Activated CD4-positive, alpha-beta memory T cell treated with anti-CD3 and anti-CD28 coated beads for 36 hours (primary cell): ENCODE measurements at regions of chr22 and their contacts with region 1.

Region 1: DNA sequence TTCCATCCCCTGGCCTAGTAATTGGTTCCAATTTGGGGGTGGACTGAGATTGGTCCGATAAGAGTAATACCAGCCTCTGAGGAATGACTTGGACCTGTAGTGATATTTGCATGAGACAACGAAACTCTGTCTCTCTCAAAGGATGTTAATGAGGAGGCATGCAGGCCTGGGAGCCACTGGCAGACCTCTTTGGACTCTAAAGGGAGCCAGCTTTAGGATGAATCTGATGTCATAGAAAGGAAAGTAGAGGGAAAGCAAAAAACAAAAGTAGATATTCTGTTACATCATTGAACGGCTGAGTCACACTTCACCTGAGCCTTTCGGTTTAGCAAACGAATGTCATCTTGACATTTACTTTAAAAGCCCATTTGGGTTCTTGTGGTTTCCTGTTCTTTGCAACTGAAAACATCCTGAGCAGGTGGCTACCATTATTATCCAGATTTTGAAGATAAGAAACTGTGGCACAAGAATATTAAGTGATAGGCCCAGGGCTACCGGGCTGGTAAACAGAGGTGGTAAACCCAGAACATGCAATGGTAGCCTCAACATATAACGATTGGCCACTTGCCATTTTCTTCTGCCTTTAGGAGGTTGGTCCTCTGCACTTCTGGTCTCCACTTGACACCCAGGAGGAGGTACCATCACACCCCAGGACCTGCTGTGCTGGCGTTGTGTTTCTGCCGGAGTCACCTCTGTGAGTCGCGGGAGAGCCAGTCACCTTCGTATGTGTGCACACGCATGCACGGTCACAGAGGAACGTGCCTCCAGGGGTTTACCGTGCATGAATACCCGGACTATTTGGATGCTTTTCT is 42.7 kb downstream of the RTL6 start:
- DNase-seq: peak; percentile 65
- H3K4me3 Mint-ChIP-seq: peak overlapping the region; percentile 20
- H3K27ac Mint-ChIP-seq: peak overlapping the region; percentile 75
- H3K4me1 Mint-ChIP-seq: peaks cover 36% of the 10 kb centered on the region
- H3K27me3 Mint-ChIP-seq: peaks cover 1% of the 10 kb centered on the region

Region 2: GRCh38 chr22:44369293-44369652 is 86.1 kb before region 1 on chr22:
- CTCF ChIA-PET with region 1: no interaction called
- POLR2A ChIA-PET with region 1: no interaction called
- intact Hi-C with region 1: no loop called
- DNase-seq: no peak
- H3K4me3 Mint-ChIP-seq: no peak overlapping the region
- H3K27ac Mint-ChIP-seq: no peak overlapping the region
- H3K4me1 Mint-ChIP-seq: no peaks in the 10 kb centered on the region
- H3K27me3 Mint-ChIP-seq: peaks cover 2% of the 10 kb centered on the region

Region 3: DNA sequence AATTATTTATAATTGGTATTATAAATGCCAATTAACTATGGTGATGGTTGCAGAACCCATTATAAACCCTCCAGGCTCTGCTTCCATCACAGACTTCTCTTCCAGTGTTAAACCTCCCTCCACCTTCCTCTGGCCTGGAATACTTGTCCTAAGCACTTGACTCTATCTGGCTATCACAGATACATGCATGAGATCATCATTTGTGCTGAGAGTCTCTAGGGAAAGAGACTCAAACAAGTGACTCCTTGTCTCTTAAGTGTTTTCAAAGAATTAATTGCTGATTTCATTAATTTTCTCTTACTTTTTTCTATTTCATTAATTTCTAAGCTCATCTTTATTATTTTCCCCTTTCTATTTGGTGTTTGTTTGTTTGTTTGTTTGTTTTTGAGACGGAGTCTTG is 13.6 kb after region 1 on chr22:
- CTCF ChIA-PET with region 1: no interaction called
- POLR2A ChIA-PET with region 1: no interaction called
- intact Hi-C with region 1: no loop called
- DNase-seq: no peak
- H3K4me3 Mint-ChIP-seq: no peak overlapping the region
- H3K27ac Mint-ChIP-seq: no peak overlapping the region
- H3K4me1 Mint-ChIP-seq: no peaks in the 10 kb centered on the region
- H3K27me3 Mint-ChIP-seq: no peaks in the 10 kb centered on the region

Region 4: GRCh38 chr22:44497218-44497904 is 42.0 kb after region 1 on chr22:
- CTCF ChIA-PET with region 1: no interaction called
- POLR2A ChIA-PET with region 1: no interaction called
- intact Hi-C with region 1: loop called (anchors 1 kb)
- DNase-seq: no peak
- H3K4me3 Mint-ChIP-seq: peak overlapping the region; percentile 74
- H3K27ac Mint-ChIP-seq: peak overlapping the region; percentile 74
- H3K4me1 Mint-ChIP-seq: peaks cover 36% of the 10 kb centered on the region
- H3K27me3 Mint-ChIP-seq: no peaks in the 10 kb centered on the region

Region 5: GRCh38 chr22:44550711-44551491 is 95.5 kb after region 1 on chr22:
- CTCF ChIA-PET with region 1: no interaction called
- POLR2A ChIA-PET with region 1: no interaction called
- intact Hi-C with region 1: loop called (anchors 2 kb)
- DNase-seq: peak; percentile 66
- H3K4me3 Mint-ChIP-seq: no peak overlapping the region
- H3K27ac Mint-ChIP-seq: no peak overlapping the region
- H3K4me1 Mint-ChIP-seq: peaks cover 10% of the 10 kb centered on the region
- H3K27me3 Mint-ChIP-seq: peaks cover 18% of the 10 kb centered on the region